ENCODE measurements at regions of chr10 and their contacts with region 1.

Region 1: GRCh38 chr10:72048450-72049124 is 39.8 kb downstream of the SPOCK2 start:
- DNase-seq: peak; percentile 94
- H3K4me3 Mint-ChIP-seq: no peak overlapping the region
- H3K27ac Mint-ChIP-seq: no peak overlapping the region
- H3K4me1 Mint-ChIP-seq: peaks cover 12% of the 10 kb centered on the region
- H3K27me3 Mint-ChIP-seq: no peaks in the 10 kb centered on the region

Region 2: GRCh38 chr10:70753841-70754621 is 1294.6 kb before region 1 on chr10:
- CTCF ChIA-PET with region 1: no interaction called
- POLR2A ChIA-PET with region 1: no interaction called
- DNase-seq: no peak
- H3K4me3 Mint-ChIP-seq: no peak overlapping the region
- H3K27ac Mint-ChIP-seq: no peak overlapping the region
- H3K4me1 Mint-ChIP-seq: peaks cover 6% of the 10 kb centered on the region
- H3K27me3 Mint-ChIP-seq: no peaks in the 10 kb centered on the region

Region 3: GRCh38 chr10:71597821-71598498 is 450.6 kb before region 1 on chr10:
- CTCF ChIA-PET with region 1: no interaction called
- POLR2A ChIA-PET with region 1: no interaction called
- DNase-seq: no peak
- H3K4me3 Mint-ChIP-seq: no peak overlapping the region
- H3K27ac Mint-ChIP-seq: no peak overlapping the region
- H3K4me1 Mint-ChIP-seq: no peaks in the 10 kb centered on the region
- H3K27me3 Mint-ChIP-seq: no peaks in the 10 kb centered on the region

Region 4: GRCh38 chr10:71899665-71900412 is 148.7 kb before region 1 on chr10:
- CTCF ChIA-PET with region 1: interaction called, 17 read pairs
- POLR2A ChIA-PET with region 1: no interaction called
- DNase-seq: no peak
- H3K4me3 Mint-ChIP-seq: no peak overlapping the region
- H3K27ac Mint-ChIP-seq: no peak overlapping the region
- H3K4me1 Mint-ChIP-seq: peaks cover 14% of the 10 kb centered on the region
- H3K27me3 Mint-ChIP-seq: no peaks in the 10 kb centered on the region

Region 5: GRCh38 chr10:72030762-72031543 is 17.6 kb before region 1 on chr10:
- CTCF ChIA-PET with region 1: interaction called, 15 read pairs
- POLR2A ChIA-PET with region 1: no interaction called
- DNase-seq: no peak
- H3K4me3 Mint-ChIP-seq: no peak overlapping the region
- H3K27ac Mint-ChIP-seq: no peak overlapping the region
- H3K4me1 Mint-ChIP-seq: no peaks in the 10 kb centered on the region
- H3K27me3 Mint-ChIP-seq: peaks cover 2% of the 10 kb centered on the region

Region 6: GRCh38 chr10:72038458-72039001 is 10.1 kb before region 1 on chr10:
- CTCF ChIA-PET with region 1: interaction called, 12 read pairs
- POLR2A ChIA-PET with region 1: no interaction called
- DNase-seq: no peak
- H3K4me3 Mint-ChIP-seq: no peak overlapping the region
- H3K27ac Mint-ChIP-seq: no peak overlapping the region
- H3K4me1 Mint-ChIP-seq: no peaks in the 10 kb centered on the region
- H3K27me3 Mint-ChIP-seq: no peaks in the 10 kb centered on the region

Region 7: DNA sequence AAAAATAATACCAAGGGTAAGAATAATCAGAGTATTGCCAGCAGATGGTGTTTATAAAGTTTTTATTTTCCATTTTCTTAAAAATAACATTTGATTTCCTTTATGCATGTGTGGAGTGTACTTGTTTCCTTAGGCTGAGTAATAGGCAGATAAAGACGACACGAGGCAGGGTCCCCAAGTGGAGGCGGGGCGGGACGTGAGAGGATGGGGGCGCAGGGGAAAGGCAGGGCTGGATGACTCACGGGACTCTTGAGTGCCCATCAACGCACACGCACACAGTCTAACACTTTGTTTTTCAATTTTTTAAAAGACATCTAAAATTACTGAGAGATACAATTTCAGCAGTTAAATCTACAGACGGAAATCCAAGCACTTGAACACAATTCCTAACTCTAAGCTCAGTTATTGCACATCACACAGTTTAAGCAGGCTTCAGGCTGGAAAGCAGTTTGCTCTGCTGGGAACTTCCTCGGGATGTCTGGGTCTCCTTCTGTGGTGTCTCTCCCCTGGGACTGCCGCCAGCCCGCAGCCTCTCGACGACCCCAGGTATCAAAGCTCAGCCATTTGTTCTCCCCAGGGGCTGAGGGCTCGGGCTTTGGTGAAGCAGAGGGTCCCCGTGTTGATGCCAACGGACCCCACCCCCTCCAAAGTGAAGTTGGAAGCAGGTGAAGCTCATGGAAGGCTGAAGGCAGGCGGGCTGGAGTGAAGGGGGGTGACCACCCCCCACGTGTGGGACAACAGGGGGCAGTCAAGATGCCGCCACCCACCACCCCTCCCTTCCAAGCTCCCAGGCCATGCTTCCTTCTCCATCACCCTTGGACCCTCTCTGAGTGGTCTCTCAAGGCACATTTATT is 10.6 kb after region 1 on chr10:
- CTCF ChIA-PET with region 1: interaction called, 21 read pairs
- POLR2A ChIA-PET with region 1: no interaction called
- DNase-seq: no peak
- H3K4me3 Mint-ChIP-seq: no peak overlapping the region
- H3K27ac Mint-ChIP-seq: peak overlapping the region; percentile 41
- H3K4me1 Mint-ChIP-seq: peaks cover 7% of the 10 kb centered on the region
- H3K27me3 Mint-ChIP-seq: no peaks in the 10 kb centered on the region